ENCODE measurements at regions of chr1 and their contacts with region 1.

Region 1: GRCh38 chr1:91282695-91283420 is 121.8 kb downstream of the HFM1 start:
- DNase-seq: peak; percentile 55
- H3K4me3 ChIP-seq: no peak overlapping the region
- H3K27ac ChIP-seq: no peak overlapping the region
- H3K4me1 ChIP-seq: no peaks in the 10 kb centered on the region
- H3K27me3 ChIP-seq: no peaks in the 10 kb centered on the region
- CTCF ChIP-seq: peak; percentile 68

Region 2: DNA sequence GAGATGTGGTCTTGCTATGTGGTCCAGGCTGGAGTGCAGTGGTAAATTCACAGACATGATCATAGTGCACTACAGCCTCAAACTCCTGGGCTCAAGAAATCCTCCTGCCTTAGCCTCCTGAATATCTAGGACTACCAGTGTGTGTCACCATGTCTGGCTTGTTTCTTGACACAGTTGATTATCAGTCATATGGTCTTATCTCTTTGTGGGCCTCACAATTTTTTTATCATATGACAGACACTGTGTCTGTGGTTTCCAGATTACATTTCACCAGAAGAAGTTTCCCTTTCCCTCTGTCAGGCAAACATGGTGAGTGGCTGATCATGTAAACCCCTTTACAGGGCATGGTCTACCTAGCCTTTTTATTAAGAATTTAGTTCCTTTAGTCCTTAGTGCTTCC is 25.7 kb after region 1 on chr1:
- intact Hi-C with region 1: no loop called
- DNase-seq: no peak
- H3K4me3 ChIP-seq: no peak overlapping the region
- H3K27ac ChIP-seq: no peak overlapping the region
- H3K4me1 ChIP-seq: no peaks in the 10 kb centered on the region
- H3K27me3 ChIP-seq: no peaks in the 10 kb centered on the region
- CTCF ChIP-seq: no peak

Region 3: DNA sequence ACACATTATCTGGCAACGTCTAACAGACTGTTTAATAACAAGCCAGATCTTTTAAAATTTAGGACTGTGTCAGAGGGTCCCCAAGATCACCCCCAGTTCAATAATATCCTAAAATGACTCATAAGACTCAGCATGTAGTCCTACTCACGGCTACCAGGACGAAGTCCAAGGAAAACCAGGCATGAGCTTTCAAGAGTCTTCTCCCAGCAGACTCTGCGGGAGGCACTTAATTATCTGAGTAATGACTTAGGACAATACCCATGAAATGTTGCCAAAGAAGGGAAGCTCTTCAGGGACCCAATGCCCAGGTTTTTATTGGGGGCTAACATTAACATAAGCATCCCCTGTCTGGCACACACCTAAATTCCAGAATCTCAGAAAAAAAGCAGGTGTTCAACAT is 114.7 kb after region 1 on chr1:
- intact Hi-C with region 1: loop called (anchors 5 kb)
- DNase-seq: no peak
- H3K4me3 ChIP-seq: no peak overlapping the region
- H3K27ac ChIP-seq: no peak overlapping the region
- H3K4me1 ChIP-seq: no peaks in the 10 kb centered on the region
- H3K27me3 ChIP-seq: no peaks in the 10 kb centered on the region
- CTCF ChIP-seq: no peak